ENCODE measurements at regions of chr9 and their contacts with region 1.

Region 1: DNA sequence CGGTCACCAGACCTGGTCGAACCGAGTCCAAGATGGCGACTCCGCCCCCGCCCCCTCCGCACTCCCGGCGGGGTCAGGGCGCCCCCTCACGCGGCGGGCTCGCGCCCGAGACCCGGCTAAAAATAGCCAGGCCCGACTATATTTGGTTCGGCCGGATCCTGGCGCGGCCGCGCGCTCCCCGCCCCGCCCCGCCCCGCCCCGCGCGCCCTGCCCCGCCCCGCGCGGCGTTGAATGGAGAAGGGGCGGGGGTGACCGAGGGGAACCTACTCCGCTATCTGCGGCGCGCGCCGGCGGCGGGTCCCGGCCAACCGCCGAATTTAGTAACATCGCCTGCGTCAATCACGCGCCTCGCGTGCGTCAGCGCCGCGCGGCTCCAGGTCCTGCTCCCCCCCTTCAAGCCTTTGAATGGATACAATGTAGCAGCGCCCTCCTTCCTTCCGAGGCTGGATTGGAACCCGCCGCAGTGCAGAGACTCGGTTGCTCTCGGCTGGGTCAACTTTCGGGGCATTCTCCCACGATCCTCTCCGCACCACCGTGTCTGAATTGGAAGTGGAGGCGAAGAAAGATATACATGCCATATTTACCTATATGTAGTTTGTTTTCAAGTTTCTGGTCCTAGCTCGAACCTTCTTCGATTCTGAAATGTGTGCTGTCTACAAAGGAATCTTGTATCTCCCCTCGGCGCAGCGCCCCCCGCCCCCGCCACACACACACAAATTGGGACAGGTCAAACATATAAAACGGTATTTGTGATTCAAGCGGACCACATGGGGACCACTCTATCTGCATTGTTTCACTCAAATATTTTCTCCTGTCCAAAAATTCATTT is 1.6 kb upstream of the NR4A3 start:
- DNase-seq: peak; percentile 89 to 97 (median 94)
- ATAC-seq: peak; percentile 78
- H3K4me3 ChIP-seq: peak overlapping the region; percentile 85
- H3K4me3 Mint-ChIP-seq: peak overlapping the region; percentile 87 to 98 (median 96)
- H3K27ac ChIP-seq: peak overlapping the region; percentile 95
- H3K27ac Mint-ChIP-seq: peak overlapping the region; percentile 75 to 100 (median 99)
- H3K4me1 ChIP-seq: peaks cover 25 to 44% of the 10 kb centered on the region in 2 donors
- H3K4me1 Mint-ChIP-seq: peaks cover 24 to 54% (median 48%) of the 10 kb centered on the region in 7 donors
- H3K27me3 ChIP-seq: peaks cover 6 to 21% of the 10 kb centered on the region in 2 donors
- H3K27me3 Mint-ChIP-seq: peaks cover 19 to 67% (median 29%) of the 10 kb centered on the region in 5 donors

Region 2: GRCh38 chr9:99057665-99058625 is 762.1 kb before region 1 on chr9:
- CTCF ChIA-PET with region 1: no interaction called
- POLR2A ChIA-PET with region 1: no interaction called
- intact Hi-C with region 1: loop called in 1 of 2 experiments (anchors 5 kb)
- DNase-seq: peak; percentile 16 to 86 (median 82)
- ATAC-seq: peak; percentile 74
- H3K4me3 ChIP-seq: peak overlapping the region; percentile 56
- H3K4me3 Mint-ChIP-seq: peak overlapping the region; percentile 79 to 92 (median 89)
- H3K27ac ChIP-seq: peak overlapping the region; percentile 25
- H3K27ac Mint-ChIP-seq: peak overlapping the region; percentile 21 to 95 (median 75)
- H3K4me1 ChIP-seq: peaks cover 62 to 76% of the 10 kb centered on the region in 2 donors
- H3K4me1 Mint-ChIP-seq: peaks cover 62 to 90% (median 78%) of the 10 kb centered on the region in 7 donors
- H3K27me3 ChIP-seq: no peaks in the 10 kb centered on the region
- H3K27me3 Mint-ChIP-seq: peaks cover 0 to 8% (median 0%) of the 10 kb centered on the region in 5 donors

Region 3: GRCh38 chr9:99235926-99236634 is 584.0 kb before region 1 on chr9:
- CTCF ChIA-PET with region 1: no interaction called
- POLR2A ChIA-PET with region 1: no interaction called
- intact Hi-C with region 1: no loop called
- DNase-seq: no peak
- ATAC-seq: peak; percentile 73
- H3K4me3 ChIP-seq: no peak overlapping the region
- H3K4me3 Mint-ChIP-seq: peak overlapping the region in 1 of 10 donors; percentile 29
- H3K27ac ChIP-seq: no peak overlapping the region
- H3K27ac Mint-ChIP-seq: peak overlapping the region in 6 of 9 donors; percentile 3 to 76 (median 26)
- H3K4me1 ChIP-seq: no peaks in the 10 kb centered on the region
- H3K4me1 Mint-ChIP-seq: peaks cover 0 to 14% (median 0%) of the 10 kb centered on the region in 7 donors
- H3K27me3 ChIP-seq: no peaks in the 10 kb centered on the region
- H3K27me3 Mint-ChIP-seq: no peaks in the 10 kb centered on the region

Region 4: GRCh38 chr9:99720455-99721050 is 99.5 kb before region 1 on chr9:
- CTCF ChIA-PET with region 1: no interaction called
- POLR2A ChIA-PET with region 1: no interaction called
- intact Hi-C with region 1: loop called in 1 of 2 experiments (anchors 5 kb)
- DNase-seq: peak in 6 of 9 donors; percentile 19 to 48 (median 36)
- ATAC-seq: peak; percentile 73
- H3K4me3 ChIP-seq: peak overlapping the region; percentile 51
- H3K4me3 Mint-ChIP-seq: peak overlapping the region; percentile 74 to 95 (median 86)
- H3K27ac ChIP-seq: peak overlapping the region; percentile 64
- H3K27ac Mint-ChIP-seq: peak overlapping the region; percentile 86 to 97 (median 94)
- H3K4me1 ChIP-seq: peaks cover 4 to 29% of the 10 kb centered on the region in 2 donors
- H3K4me1 Mint-ChIP-seq: peaks cover 17 to 42% (median 32%) of the 10 kb centered on the region in 7 donors
- H3K27me3 ChIP-seq: no peaks in the 10 kb centered on the region
- H3K27me3 Mint-ChIP-seq: peaks cover 0 to 2% (median 0%) of the 10 kb centered on the region in 5 donors

Region 5: DNA sequence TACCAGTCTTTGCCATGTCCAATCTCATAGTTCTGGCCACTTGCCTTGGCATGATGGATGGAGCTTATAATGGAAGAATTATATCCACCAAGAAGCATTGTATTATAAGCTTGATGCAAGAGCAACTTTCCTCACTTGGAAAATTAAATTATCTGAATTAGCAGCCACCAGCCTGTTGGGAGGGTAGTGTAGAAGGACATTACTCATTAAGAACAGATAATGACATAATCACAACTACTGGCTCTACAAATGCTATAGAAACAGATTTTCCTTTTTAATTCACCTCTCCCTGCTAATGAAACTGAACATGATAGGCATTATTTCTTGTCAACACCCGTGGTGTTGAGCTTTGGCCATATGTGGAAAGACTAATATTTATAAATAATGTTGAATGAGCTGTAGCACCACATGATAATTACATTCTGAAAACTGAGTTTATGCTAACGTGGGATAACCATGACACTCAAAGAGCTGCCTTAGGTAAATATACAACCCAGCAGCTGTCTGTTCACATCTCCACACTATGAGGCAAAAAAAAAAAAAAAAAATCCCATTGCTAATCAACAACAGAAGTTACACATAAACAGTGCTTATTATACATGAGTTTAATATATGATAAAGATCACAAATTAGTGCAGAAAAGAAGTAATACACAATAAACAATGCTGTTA is 46.5 kb before region 1 on chr9:
- CTCF ChIA-PET with region 1: no interaction called
- POLR2A ChIA-PET with region 1: no interaction called
- intact Hi-C with region 1: no loop called
- DNase-seq: no peak
- ATAC-seq: no peak
- H3K4me3 ChIP-seq: no peak overlapping the region
- H3K4me3 Mint-ChIP-seq: no peak overlapping the region
- H3K27ac ChIP-seq: no peak overlapping the region
- H3K27ac Mint-ChIP-seq: no peak overlapping the region
- H3K4me1 ChIP-seq: no peaks in the 10 kb centered on the region
- H3K4me1 Mint-ChIP-seq: no peaks in the 10 kb centered on the region
- H3K27me3 ChIP-seq: no peaks in the 10 kb centered on the region
- H3K27me3 Mint-ChIP-seq: peaks cover 19 to 40% (median 26%) of the 10 kb centered on the region in 5 donors

Region 6: GRCh38 chr9:99906403-99907207 is 86.5 kb after region 1 on chr9 and contains the start of gene STX17:
- CTCF ChIA-PET with region 1: no interaction called
- POLR2A ChIA-PET with region 1: interaction called, 8 read pairs
- intact Hi-C with region 1: loop called (anchors 1 kb)
- DNase-seq: peak; percentile 78 to 94 (median 88)
- ATAC-seq: peak; percentile 90
- H3K4me3 ChIP-seq: peak within 1 kb of the TSS; percentile 96
- H3K4me3 Mint-ChIP-seq: peak within 1 kb of the TSS; percentile 92 to 99 (median 97)
- H3K27ac ChIP-seq: peak within 1 kb of the TSS; percentile 99
- H3K27ac Mint-ChIP-seq: peak within 1 kb of the TSS; percentile 96 to 100 (median 99)
- H3K4me1 ChIP-seq: peaks cover 14 to 17% of the 10 kb centered on the region in 2 donors
- H3K4me1 Mint-ChIP-seq: peaks cover 29 to 46% (median 40%) of the 10 kb centered on the region in 7 donors
- H3K27me3 ChIP-seq: no peaks in the 10 kb centered on the region
- H3K27me3 Mint-ChIP-seq: peaks cover 0 to 14% (median 7%) of the 10 kb centered on the region in 5 donors
- total RNA-seq, gene STX17: 34.2 to 63.2 (median 51.2) TPM

Region 7: GRCh38 chr9:100150214-100150613 is 330.1 kb after region 1 on chr9:
- CTCF ChIA-PET with region 1: no interaction called
- POLR2A ChIA-PET with region 1: no interaction called
- intact Hi-C with region 1: no loop called
- DNase-seq: no peak
- ATAC-seq: no peak
- H3K4me3 ChIP-seq: no peak overlapping the region
- H3K4me3 Mint-ChIP-seq: no peak overlapping the region
- H3K27ac ChIP-seq: no peak overlapping the region
- H3K27ac Mint-ChIP-seq: no peak overlapping the region
- H3K4me1 ChIP-seq: no peaks in the 10 kb centered on the region
- H3K4me1 Mint-ChIP-seq: no peaks in the 10 kb centered on the region
- H3K27me3 ChIP-seq: no peaks in the 10 kb centered on the region
- H3K27me3 Mint-ChIP-seq: no peaks in the 10 kb centered on the region

Region 8: DNA sequence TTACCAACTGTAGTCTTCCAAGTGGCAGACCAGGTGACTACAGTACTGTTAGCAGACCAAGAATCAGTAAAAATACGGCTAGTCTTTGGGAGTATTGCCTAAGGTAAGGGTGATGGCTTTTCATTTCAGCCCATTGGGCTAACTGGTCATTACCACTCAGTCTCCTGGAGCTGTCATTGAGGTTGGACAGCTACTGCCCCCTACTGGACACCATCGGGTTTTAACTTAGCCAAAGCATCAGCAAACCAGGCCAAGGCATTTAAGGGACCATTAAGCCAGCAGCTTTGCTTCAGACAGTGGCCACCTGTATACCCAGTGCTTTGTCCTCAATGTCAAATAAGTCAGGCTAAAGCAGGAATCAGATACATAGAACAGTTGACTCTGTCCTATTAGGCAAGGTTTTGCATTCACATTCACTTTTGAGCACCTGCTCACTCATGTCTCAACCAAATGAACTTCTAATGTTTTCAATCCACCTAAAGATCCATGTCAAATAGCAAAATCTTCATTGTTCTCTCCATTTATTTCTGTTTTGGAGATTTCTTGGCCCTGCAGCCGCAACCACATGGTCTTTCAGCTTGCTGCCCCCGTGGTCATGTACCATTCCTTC is 396.2 kb after region 1 on chr9:
- CTCF ChIA-PET with region 1: no interaction called
- POLR2A ChIA-PET with region 1: no interaction called
- intact Hi-C with region 1: loop called in 1 of 2 experiments (anchors 5 kb)
- DNase-seq: peak; percentile 17 to 53 (median 41)
- ATAC-seq: peak; percentile 84
- H3K4me3 ChIP-seq: no peak overlapping the region
- H3K4me3 Mint-ChIP-seq: no peak overlapping the region
- H3K27ac ChIP-seq: no peak overlapping the region
- H3K27ac Mint-ChIP-seq: no peak overlapping the region
- H3K4me1 ChIP-seq: no peaks in the 10 kb centered on the region
- H3K4me1 Mint-ChIP-seq: peaks cover 0 to 9% (median 0%) of the 10 kb centered on the region in 7 donors
- H3K27me3 ChIP-seq: no peaks in the 10 kb centered on the region
- H3K27me3 Mint-ChIP-seq: no peaks in the 10 kb centered on the region

Region 9: GRCh38 chr9:100437860-100438805 is 618.1 kb after region 1 on chr9:
- CTCF ChIA-PET with region 1: no interaction called
- POLR2A ChIA-PET with region 1: no interaction called
- intact Hi-C with region 1: loop called in 1 of 2 experiments (anchors 10 kb)
- DNase-seq: peak; percentile 22 to 68 (median 52)
- ATAC-seq: peak; percentile 81
- H3K4me3 ChIP-seq: no peak overlapping the region
- H3K4me3 Mint-ChIP-seq: no peak overlapping the region
- H3K27ac ChIP-seq: no peak overlapping the region
- H3K27ac Mint-ChIP-seq: no peak overlapping the region
- H3K4me1 ChIP-seq: no peaks in the 10 kb centered on the region
- H3K4me1 Mint-ChIP-seq: peaks cover 0 to 13% (median 3%) of the 10 kb centered on the region in 7 donors
- H3K27me3 ChIP-seq: no peaks in the 10 kb centered on the region
- H3K27me3 Mint-ChIP-seq: no peaks in the 10 kb centered on the region